ENCODE measurements at regions of chr14 and their contacts with region 1.

Region 1: GRCh38 chr14:23366426-23366921 is 1.5 kb upstream of the EFS start:
- DNase-seq: peak; percentile 67 to 69
- H3K4me3 ChIP-seq: peak overlapping the region; percentile 60 to 88 (median 65)
- H3K27ac ChIP-seq: peak overlapping the region; percentile 98 to 99
- H3K4me1 ChIP-seq: peaks cover 6 to 8% of the 10 kb centered on the region in 2 donors
- H3K27me3 ChIP-seq: no peaks in the 10 kb centered on the region
- CTCF ChIP-seq: no peak
- POLR2A ChIP-seq: peak; percentile 16

Region 2: DNA sequence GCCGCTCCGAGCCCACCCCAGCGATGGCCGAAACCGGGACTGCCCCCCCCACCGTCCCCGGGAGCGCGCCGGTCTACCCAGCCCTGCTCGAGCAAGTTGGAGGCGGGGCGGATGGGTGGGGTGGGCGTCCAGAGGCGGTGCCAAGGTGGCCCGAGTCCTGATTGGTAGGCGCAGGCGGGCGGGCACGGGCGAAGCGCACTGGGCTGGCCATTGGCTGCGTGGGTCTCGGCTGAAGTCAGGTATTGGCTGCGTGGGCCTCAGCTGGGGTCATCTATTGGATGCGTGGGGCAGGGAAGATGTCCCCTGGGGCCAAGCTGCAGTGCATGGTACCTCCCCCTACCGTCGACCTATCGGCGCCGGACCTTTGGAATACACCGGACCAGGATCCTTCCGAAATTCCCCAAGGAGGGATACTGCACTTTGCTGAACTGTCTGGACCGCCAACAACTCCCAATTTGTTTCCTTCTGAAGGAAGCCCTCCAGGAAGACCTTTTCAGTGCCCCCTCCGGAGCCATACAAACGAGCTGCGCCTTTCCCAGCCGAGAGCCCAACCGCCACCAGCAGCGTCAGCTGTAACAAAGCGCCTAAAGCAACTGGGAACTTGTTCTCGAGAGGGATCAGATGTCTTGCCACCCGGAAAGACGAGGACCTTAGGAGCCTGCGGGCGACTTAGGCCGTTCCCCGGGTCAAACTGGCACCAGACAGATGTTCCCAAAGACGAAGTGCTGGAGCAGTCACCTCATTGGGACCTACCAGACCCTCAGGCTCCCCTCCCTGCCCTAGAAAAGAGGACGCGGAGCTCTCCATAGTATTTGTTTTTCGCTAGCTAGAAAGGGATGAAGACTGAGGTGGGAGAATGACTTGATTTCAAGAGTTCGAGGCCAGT is 80.2 kb before region 1 on chr14 and contains the start of gene HOMEZ:
- intact Hi-C with region 1: loop called (anchors 10 kb)
- DNase-seq: peak; percentile 100
- H3K4me3 ChIP-seq: peak within 1 kb of the TSS; percentile 72 to 99 (median 92)
- H3K27ac ChIP-seq: peak within 1 kb of the TSS; percentile 97 to 99
- H3K4me1 ChIP-seq: no peaks in the 10 kb centered on the region
- H3K27me3 ChIP-seq: no peaks in the 10 kb centered on the region
- CTCF ChIP-seq: no peak
- POLR2A ChIP-seq: peak; percentile 17
- total RNA-seq, gene HOMEZ: 10.8 to 15.4 (median 12.0) TPM

Measured in breast epithelium (tissue), 4 donors.